Activated B cell treated with CpG ODN at 0.5 μM for 24 hours (primary cell): ENCODE measurements at regions of chr10 and their contacts with region 1.

Region 1: GRCh38 chr10:50417886-50418830 is 166.8 kb upstream of the ASAH2 start:
- DNase-seq: peak; percentile 48
- ATAC-seq: peak; percentile 87
- H3K4me3 Mint-ChIP-seq: peak overlapping the region; percentile 92
- H3K27ac Mint-ChIP-seq: peak overlapping the region; percentile 81
- H3K4me1 Mint-ChIP-seq: peaks cover 48% of the 10 kb centered on the region
- H3K27me3 Mint-ChIP-seq: no peaks in the 10 kb centered on the region
- CTCF ChIP-seq: no peak

Region 2: GRCh38 chr10:50260791-50261281 is 157.3 kb before region 1 on chr10:
- CTCF ChIA-PET with region 1: no interaction called
- POLR2A ChIA-PET with region 1: no interaction called
- intact Hi-C with region 1: loop called (anchors 5 kb)
- DNase-seq: no peak
- ATAC-seq: peak; percentile 97
- H3K4me3 Mint-ChIP-seq: peak overlapping the region; percentile 57
- H3K27ac Mint-ChIP-seq: peak overlapping the region; percentile 60
- H3K4me1 Mint-ChIP-seq: peaks cover 36% of the 10 kb centered on the region
- H3K27me3 Mint-ChIP-seq: peaks cover 12% of the 10 kb centered on the region
- CTCF ChIP-seq: no peak

Region 3: DNA sequence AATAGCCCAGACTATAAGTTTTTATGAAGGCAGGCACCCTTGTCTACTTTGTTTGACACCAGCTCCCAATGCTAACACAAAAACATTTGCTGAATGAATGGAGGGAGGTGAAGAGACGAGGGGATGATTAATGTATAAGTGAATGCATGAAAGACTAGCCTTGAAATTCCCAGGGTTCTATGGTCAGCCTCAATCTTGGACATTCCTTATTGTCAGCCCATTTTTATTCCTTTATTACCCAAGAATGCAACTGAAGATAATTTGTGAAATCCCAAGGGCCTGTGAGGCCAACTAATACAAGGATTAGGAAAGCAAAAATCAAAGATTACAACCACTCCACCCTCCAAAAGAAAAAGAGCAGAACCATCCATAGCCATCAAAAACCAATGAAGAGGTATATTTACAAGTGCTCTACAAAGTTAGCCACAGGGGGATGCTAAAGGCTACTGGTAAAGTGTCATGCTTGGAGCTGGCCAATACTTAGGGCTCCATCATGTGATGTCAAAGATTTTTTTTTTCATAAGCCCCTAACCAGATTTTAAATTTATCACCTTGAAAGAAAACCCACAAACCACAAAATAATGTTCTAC is 126.8 kb before region 1 on chr10:
- CTCF ChIA-PET with region 1: no interaction called
- POLR2A ChIA-PET with region 1: no interaction called
- intact Hi-C with region 1: loop called (anchors 1 kb)
- DNase-seq: no peak
- ATAC-seq: no peak
- H3K4me3 Mint-ChIP-seq: no peak overlapping the region
- H3K27ac Mint-ChIP-seq: no peak overlapping the region
- H3K4me1 Mint-ChIP-seq: no peaks in the 10 kb centered on the region
- H3K27me3 Mint-ChIP-seq: no peaks in the 10 kb centered on the region
- CTCF ChIP-seq: no peak

Region 4: DNA sequence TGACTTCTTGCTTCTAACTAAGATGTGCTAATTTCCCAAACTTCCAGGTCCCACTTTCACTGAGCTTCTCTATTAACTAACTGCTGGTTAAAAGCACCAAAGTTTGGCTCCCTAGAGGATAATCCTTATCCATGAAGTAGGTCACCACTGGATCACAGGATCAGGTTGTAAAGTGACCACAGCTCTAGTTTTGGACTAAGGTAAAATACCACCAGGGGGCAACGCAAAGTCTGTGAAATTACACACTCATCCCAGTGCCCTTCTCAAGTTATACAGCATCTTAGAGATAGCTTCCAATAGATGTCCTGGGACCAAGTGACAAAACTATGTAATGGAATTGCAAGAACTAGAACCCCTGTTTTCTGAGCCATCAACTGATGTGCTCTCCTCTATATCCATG is 50.4 kb before region 1 on chr10:
- CTCF ChIA-PET with region 1: interaction called, 6 read pairs
- POLR2A ChIA-PET with region 1: no interaction called
- intact Hi-C with region 1: loop called (anchors 1 kb)
- DNase-seq: no peak
- ATAC-seq: no peak
- H3K4me3 Mint-ChIP-seq: no peak overlapping the region
- H3K27ac Mint-ChIP-seq: no peak overlapping the region
- H3K4me1 Mint-ChIP-seq: peaks cover 24% of the 10 kb centered on the region
- H3K27me3 Mint-ChIP-seq: no peaks in the 10 kb centered on the region
- CTCF ChIP-seq: no peak

Region 5: GRCh38 chr10:50431791-50432190 is 13.6 kb after region 1 on chr10:
- CTCF ChIA-PET with region 1: no interaction called
- POLR2A ChIA-PET with region 1: no interaction called
- intact Hi-C with region 1: no loop called
- DNase-seq: no peak
- ATAC-seq: peak; percentile 61
- H3K4me3 Mint-ChIP-seq: no peak overlapping the region
- H3K27ac Mint-ChIP-seq: no peak overlapping the region
- H3K4me1 Mint-ChIP-seq: peaks cover 12% of the 10 kb centered on the region
- H3K27me3 Mint-ChIP-seq: no peaks in the 10 kb centered on the region
- CTCF ChIP-seq: no peak

Region 6: GRCh38 chr10:50452603-50453002 is 34.4 kb after region 1 on chr10:
- CTCF ChIA-PET with region 1: no interaction called
- POLR2A ChIA-PET with region 1: no interaction called
- intact Hi-C with region 1: loop called (anchors 5 kb)
- DNase-seq: no peak
- ATAC-seq: peak; percentile 71
- H3K4me3 Mint-ChIP-seq: peak overlapping the region; percentile 12
- H3K27ac Mint-ChIP-seq: peak overlapping the region; percentile 57
- H3K4me1 Mint-ChIP-seq: peaks cover 57% of the 10 kb centered on the region
- H3K27me3 Mint-ChIP-seq: no peaks in the 10 kb centered on the region
- CTCF ChIP-seq: no peak

Region 7: DNA sequence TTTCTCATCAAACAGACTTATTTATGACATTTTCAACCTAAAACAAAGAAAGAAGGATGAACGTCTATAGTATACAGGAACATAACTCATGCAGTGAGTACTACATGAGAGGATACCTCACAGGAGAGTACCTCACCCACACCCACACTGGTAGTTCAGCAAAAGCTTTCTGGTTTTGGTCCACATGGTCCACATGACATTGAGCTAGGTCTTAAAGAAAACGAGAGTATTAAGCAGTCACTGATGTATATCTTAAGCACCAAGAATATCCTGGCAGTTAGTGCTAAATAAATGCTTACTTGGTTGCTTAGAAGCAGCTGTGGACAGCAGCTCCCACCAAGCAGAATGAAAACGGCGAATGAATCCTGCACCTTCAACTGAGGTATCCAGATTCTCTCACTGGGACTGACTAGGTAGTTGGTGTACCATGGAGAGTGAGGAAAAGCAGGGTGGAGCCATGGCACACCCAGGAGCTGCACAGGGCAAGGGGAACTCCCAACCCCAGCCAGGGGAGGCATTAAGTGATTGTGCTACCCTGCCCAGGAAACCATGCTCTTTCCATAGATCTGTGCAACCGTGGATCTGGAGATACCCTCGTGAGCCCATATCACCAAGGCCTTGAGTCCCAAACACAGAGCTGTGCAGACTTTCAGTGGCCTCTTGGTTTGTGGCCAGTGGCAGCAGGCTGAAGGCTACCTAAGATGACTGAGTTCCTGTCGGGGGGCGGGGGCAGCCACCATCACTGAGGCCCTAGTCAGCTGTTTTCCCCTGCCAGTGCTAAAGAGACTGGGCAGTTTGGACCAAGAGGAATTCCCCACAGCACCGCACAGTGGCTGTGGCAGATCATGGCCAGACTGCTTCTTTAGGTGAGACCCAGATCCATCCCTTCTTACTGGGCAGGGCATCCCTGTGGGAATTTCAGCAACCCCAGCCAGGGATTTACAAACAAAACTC is 62.2 kb after region 1 on chr10:
- CTCF ChIA-PET with region 1: no interaction called
- POLR2A ChIA-PET with region 1: no interaction called
- intact Hi-C with region 1: no loop called
- DNase-seq: no peak
- ATAC-seq: no peak
- H3K4me3 Mint-ChIP-seq: no peak overlapping the region
- H3K27ac Mint-ChIP-seq: no peak overlapping the region
- H3K4me1 Mint-ChIP-seq: peaks cover 7% of the 10 kb centered on the region
- H3K27me3 Mint-ChIP-seq: no peaks in the 10 kb centered on the region
- CTCF ChIP-seq: no peak